Activated T-helper 2 cell treated with anti-CD3 and anti-CD28 coated beads, Interferon-gamma antibody, Interleukin-2, Interleukin-4, amounts not matched to agents 10 μg/mL and 5 μg/mL and 100 μg/mL, durations not matched to agents 14 hours and 24 hours and 36 hours (primary cell): ENCODE measurements at regions of chrX and their contacts with region 1.

Region 1: GRCh38 chrX:104253567-104254441 is 929 bp downstream of the ESX1 start:
- DNase-seq: no peak
- H3K4me3 Mint-ChIP-seq: peak overlapping the region; percentile 69
- H3K27ac Mint-ChIP-seq: no peak overlapping the region
- H3K4me1 Mint-ChIP-seq: peaks cover 4% of the 10 kb centered on the region
- H3K27me3 Mint-ChIP-seq: peaks cover 29% of the 10 kb centered on the region

Region 2: GRCh38 chrX:103999234-103999633 is 254.6 kb before region 1 on chrX:
- intact Hi-C with region 1: no loop called
- DNase-seq: no peak
- H3K4me3 Mint-ChIP-seq: no peak overlapping the region
- H3K27ac Mint-ChIP-seq: no peak overlapping the region
- H3K4me1 Mint-ChIP-seq: no peaks in the 10 kb centered on the region
- H3K27me3 Mint-ChIP-seq: no peaks in the 10 kb centered on the region

Region 3: DNA sequence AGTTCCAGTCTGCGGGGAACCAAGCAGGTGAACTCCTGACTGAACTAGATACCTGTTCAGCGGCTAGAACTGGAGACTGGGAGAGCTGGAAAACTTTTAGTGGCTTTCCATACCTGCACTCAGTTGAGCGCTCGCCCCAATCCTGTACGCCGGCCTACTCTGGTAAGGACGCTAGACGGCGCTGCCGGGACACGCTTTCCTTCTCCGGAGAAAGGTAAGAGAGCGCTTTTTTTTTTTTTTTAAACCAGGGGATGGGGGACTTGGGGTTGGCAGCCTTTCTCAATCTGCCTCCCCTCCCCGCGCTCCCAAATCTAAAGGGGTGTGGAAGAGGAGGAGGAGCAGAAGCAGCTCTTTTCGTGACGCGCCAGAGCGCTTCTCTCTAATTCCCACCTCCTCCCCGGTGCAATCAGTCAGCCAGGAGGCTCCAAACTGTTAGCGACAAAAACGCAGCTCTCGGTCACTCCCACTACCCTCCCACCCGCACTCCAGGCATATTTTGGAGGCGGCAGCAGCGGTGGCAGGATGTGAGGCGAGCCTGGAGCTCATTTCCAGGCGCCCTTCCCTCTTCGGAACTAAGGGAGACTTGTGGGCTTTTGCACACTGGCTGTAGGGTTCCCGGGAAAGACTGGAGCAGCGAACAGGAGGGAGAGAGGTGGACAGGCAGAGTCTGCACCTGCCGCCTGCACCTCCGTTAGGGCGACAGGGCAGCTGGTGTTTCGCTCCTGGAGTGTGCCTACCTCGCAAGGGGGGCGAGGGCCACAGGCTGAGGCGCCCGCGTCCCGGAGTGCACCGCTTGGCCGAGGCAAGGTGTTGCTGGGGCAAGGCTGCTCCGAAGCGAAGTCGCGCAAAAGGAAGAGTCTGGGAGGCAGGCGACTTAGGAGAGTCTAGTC is 312.2 kb after region 1 on chrX and contains the start of gene IL1RAPL2:
- intact Hi-C with region 1: loop called (anchors 10 kb)
- DNase-seq: no peak
- H3K4me3 Mint-ChIP-seq: no peak within 1 kb of the TSS
- H3K27ac Mint-ChIP-seq: no peak within 1 kb of the TSS
- H3K4me1 Mint-ChIP-seq: no peaks in the 10 kb centered on the region
- H3K27me3 Mint-ChIP-seq: peaks cover 28% of the 10 kb centered on the region
- total RNA-seq, gene IL1RAPL2: not detected in 2 replicates